ENCODE measurements at regions of chr6 and their contacts with region 1.

Region 1: GRCh38 chr6:99467509-99468106 is 42.5 kb upstream of the PNISR start:
- DNase-seq: no peak
- ATAC-seq: no peak
- H3K4me3 Mint-ChIP-seq: no peak overlapping the region
- H3K27ac Mint-ChIP-seq: no peak overlapping the region
- H3K4me1 Mint-ChIP-seq: no peaks in the 10 kb centered on the region
- H3K27me3 Mint-ChIP-seq: no peaks in the 10 kb centered on the region
- CTCF ChIP-seq: peak; percentile 97

Region 2: GRCh38 chr6:99520855-99521632 is 53.4 kb after region 1 on chr6:
- CTCF ChIA-PET with region 1: interaction called, 4 read pairs
- POLR2A ChIA-PET with region 1: interaction called, 4 read pairs
- intact Hi-C with region 1: loop called (anchors 1 kb)
- DNase-seq: peak; percentile 71
- ATAC-seq: peak; percentile 86
- H3K4me3 Mint-ChIP-seq: peak overlapping the region; percentile 99
- H3K27ac Mint-ChIP-seq: peak overlapping the region; percentile 97
- H3K4me1 Mint-ChIP-seq: peaks cover 41% of the 10 kb centered on the region
- H3K27me3 Mint-ChIP-seq: no peaks in the 10 kb centered on the region
- CTCF ChIP-seq: peak; percentile 33

Region 3: DNA sequence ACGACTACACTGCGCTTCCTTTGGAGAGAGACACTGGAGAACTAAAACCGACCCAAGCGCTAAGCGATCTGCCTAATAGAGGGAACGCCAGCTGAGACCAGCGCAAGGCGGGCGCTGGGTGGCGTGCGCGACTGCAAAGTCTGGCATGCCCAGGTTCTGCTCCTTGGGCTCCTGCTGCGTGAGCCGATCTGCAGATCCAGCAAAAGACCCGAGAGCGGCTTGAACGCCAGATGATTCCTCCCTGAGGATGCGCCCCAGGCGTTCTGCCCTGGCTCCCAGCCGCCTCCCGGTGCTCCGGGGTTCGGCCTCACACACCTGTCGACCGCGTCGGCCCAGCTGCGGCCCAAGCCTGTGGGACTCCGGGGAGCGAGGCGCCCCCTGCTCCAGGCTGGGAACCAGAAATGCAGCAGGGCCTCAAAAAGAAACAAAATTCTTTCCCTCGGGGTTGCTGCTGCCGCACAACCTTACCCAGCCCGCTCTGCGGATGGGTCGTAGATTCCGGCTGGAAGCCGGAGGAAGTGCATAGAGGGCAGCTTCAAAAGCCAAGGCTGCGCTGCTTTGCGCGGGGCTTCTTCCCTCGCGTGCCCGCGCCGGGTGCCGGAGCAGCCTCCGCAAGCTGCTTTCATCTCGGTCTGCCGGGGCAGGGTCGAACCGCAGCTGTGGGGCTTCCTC is 121.1 kb after region 1 on chr6:
- CTCF ChIA-PET with region 1: no interaction called
- POLR2A ChIA-PET with region 1: no interaction called
- intact Hi-C with region 1: loop called (anchors 5 kb)
- DNase-seq: peak; percentile 38
- ATAC-seq: peak; percentile 83
- H3K4me3 Mint-ChIP-seq: peak overlapping the region; percentile 86
- H3K27ac Mint-ChIP-seq: peak overlapping the region; percentile 46
- H3K4me1 Mint-ChIP-seq: peaks cover 30% of the 10 kb centered on the region
- H3K27me3 Mint-ChIP-seq: peaks cover 56% of the 10 kb centered on the region
- CTCF ChIP-seq: no peak

Region 4: GRCh38 chr6:99613409-99613704 is 145.7 kb after region 1 on chr6:
- CTCF ChIA-PET with region 1: interaction called, 3 read pairs
- POLR2A ChIA-PET with region 1: no interaction called
- intact Hi-C with region 1: loop called (anchors 1 kb)
- DNase-seq: peak; percentile 47
- ATAC-seq: peak; percentile 83
- H3K4me3 Mint-ChIP-seq: peak overlapping the region; percentile 75
- H3K27ac Mint-ChIP-seq: no peak overlapping the region
- H3K4me1 Mint-ChIP-seq: peaks cover 17% of the 10 kb centered on the region
- H3K27me3 Mint-ChIP-seq: peaks cover 72% of the 10 kb centered on the region
- CTCF ChIP-seq: no peak

Region 5: DNA sequence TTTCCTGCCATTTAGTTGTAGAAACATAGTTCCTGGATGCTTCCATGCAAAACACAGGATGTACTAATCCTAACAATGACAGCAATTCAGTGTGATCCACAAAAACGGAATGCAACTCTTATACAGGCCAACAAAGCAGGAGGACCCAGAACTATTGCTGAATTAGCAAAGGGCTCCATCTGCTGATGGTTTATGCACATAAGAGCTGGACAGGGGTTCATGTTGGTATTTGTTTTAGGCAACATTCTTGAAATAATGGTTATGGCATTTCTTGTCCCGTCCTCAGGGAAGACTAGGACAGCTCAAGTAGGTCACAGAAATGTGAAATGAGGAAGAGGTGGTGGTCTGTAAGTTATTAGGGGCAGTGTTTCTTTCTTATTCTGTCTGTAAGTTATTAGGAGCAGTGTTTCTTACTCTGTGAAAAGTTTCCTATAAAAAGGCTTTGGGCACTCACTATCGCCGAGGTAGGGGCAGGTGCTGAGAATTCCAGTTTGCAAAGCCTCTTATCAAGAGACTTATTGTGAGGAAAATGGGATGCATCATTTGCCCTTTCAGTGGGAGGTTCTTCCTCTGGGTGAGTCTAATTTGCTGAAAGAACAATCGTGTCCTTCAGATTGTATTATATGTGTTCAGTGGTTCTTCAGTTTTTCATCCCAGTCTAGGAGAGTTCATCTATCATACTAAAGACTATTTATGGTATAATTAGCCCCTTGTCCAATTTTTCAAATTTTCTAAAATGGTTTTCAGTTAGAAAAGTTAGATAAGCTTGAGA is 355.3 kb after region 1 on chr6:
- CTCF ChIA-PET with region 1: no interaction called
- POLR2A ChIA-PET with region 1: no interaction called
- intact Hi-C with region 1: loop called (anchors 5 kb)
- DNase-seq: no peak
- ATAC-seq: no peak
- H3K4me3 Mint-ChIP-seq: no peak overlapping the region
- H3K27ac Mint-ChIP-seq: no peak overlapping the region
- H3K4me1 Mint-ChIP-seq: peaks cover 4% of the 10 kb centered on the region
- H3K27me3 Mint-ChIP-seq: peaks cover 23% of the 10 kb centered on the region
- CTCF ChIP-seq: no peak

Region 6: DNA sequence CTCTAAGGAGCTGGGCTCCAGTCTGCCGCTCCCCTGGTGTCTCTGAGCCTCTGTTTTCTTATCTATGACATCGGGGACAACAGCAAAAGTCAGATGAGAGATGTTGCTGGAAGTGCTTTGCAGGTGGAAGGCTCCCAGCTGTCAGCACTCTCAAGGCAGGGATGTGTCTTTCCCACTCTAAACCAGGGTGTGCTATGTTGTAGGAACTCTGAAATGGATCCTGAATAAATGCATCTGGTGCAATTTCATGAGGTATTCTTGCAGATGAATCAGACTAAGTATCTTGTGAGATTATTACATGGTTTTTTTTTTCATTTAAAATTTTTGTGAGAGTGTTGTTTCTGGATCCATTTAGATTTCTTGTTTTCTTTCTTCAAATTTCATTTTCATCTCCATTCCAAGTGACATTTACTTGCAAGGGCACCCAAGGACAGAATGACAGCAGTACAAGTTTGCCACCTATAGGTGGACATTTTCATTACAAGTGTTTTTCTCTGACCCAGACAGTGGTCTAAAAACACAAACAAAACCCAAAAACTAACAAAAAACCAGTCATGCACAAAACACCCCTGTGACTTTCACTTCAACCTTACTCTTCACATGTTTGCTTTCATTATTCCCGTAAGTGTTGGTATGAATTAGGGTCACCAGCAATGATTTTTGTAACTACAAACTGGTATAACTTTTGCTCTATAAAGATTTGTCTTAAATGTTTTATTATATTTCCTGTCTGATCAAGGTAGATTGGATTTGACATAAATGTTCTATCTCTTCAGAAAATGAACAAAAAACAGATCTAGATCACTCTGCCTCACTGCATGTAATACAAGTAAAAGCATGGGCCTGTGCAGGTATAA is 1011.8 kb after region 1 on chr6:
- CTCF ChIA-PET with region 1: no interaction called
- POLR2A ChIA-PET with region 1: no interaction called
- intact Hi-C with region 1: loop called (anchors 10 kb)
- DNase-seq: no peak
- ATAC-seq: no peak
- H3K4me3 Mint-ChIP-seq: no peak overlapping the region
- H3K27ac Mint-ChIP-seq: no peak overlapping the region
- H3K4me1 Mint-ChIP-seq: no peaks in the 10 kb centered on the region
- H3K27me3 Mint-ChIP-seq: peaks cover 8% of the 10 kb centered on the region
- CTCF ChIP-seq: no peak